ENCODE measurements at regions of chr1 and their contacts with region 1.

Region 1: GRCh38 chr1:85307987-85308832 is 31.8 kb upstream of the BCL10 start:
- DNase-seq: peak; percentile 93
- H3K4me3 Mint-ChIP-seq: no peak overlapping the region
- H3K27ac Mint-ChIP-seq: peak overlapping the region; percentile 49
- H3K4me1 Mint-ChIP-seq: peaks cover 37% of the 10 kb centered on the region
- H3K27me3 Mint-ChIP-seq: no peaks in the 10 kb centered on the region
- CTCF ChIP-seq: peak; percentile 95

Region 2: DNA sequence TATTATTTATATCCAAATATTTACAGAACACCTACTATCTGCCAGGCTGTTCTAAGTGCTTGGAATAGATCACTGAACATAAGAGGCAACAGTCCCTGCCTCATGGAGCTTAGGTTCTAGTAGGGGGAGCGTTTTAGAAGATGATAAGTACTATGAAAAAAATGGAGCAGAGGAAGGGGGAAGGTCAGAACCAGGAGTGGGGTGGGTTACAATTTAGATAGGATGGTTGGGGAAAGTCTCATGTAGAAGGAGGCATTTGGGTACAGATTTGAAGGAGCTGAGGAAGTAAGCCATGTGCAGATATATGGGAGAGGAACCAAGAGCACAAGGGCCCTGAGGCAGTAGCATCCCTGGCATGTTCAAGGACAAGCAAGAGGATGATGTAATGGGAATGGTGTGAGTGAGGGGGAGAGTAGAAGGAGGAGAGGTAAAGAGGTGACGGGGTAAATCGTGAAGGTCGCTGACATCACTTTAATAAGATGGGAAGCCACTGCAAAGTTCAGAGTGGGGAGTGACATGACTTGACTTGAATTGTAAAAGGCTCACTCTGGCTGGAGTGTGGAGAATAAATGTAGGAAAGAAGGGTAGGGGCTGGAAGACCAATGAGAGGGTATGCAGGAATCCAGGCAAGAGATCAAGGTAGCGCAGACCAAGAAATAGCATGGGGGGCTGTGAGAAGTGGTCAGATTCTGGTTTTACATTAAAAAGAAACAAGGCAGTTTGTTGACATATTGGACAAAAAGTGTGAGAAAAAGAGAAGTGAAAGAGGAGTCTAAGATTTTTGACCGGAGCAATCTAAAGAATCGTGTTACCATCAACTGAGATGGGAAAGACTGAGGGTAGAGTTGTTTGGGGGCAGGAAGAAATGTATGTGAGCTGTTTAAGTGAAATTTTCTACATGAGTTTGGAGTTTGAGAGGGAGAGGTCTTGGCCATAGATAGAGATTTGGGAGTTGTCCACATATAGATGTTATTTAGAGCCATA is 507.8 kb before region 1 on chr1:
- CTCF ChIA-PET with region 1: no interaction called
- intact Hi-C with region 1: no loop called
- DNase-seq: no peak
- H3K4me3 Mint-ChIP-seq: no peak overlapping the region
- H3K27ac Mint-ChIP-seq: no peak overlapping the region
- H3K4me1 Mint-ChIP-seq: no peaks in the 10 kb centered on the region
- H3K27me3 Mint-ChIP-seq: peaks cover 7% of the 10 kb centered on the region
- CTCF ChIP-seq: no peak

Region 3: DNA sequence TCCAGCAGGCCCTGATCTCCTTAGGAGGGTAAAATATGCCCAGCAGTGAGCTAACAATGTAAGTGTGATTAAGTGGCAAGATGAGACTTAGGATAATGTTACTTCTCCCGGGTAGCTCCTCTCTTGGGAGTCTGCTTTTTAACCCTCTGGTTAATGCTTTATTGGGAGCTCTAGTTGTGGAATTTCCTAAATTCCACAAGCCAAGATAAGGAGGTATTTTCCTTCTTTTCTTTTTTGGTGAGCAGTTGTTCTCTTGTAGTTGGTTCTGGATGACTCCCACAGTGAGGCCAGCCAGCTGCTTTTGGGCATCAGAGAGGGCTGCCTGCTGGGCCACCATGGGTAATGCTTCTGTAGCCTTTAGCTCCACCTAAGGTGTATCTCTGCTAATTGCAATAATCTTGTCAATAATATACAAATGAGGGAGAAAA is 68.0 kb before region 1 on chr1:
- CTCF ChIA-PET with region 1: no interaction called
- intact Hi-C with region 1: no loop called
- DNase-seq: peak; percentile 26
- H3K4me3 Mint-ChIP-seq: no peak overlapping the region
- H3K27ac Mint-ChIP-seq: no peak overlapping the region
- H3K4me1 Mint-ChIP-seq: no peaks in the 10 kb centered on the region
- H3K27me3 Mint-ChIP-seq: no peaks in the 10 kb centered on the region
- CTCF ChIP-seq: no peak

Region 4: DNA sequence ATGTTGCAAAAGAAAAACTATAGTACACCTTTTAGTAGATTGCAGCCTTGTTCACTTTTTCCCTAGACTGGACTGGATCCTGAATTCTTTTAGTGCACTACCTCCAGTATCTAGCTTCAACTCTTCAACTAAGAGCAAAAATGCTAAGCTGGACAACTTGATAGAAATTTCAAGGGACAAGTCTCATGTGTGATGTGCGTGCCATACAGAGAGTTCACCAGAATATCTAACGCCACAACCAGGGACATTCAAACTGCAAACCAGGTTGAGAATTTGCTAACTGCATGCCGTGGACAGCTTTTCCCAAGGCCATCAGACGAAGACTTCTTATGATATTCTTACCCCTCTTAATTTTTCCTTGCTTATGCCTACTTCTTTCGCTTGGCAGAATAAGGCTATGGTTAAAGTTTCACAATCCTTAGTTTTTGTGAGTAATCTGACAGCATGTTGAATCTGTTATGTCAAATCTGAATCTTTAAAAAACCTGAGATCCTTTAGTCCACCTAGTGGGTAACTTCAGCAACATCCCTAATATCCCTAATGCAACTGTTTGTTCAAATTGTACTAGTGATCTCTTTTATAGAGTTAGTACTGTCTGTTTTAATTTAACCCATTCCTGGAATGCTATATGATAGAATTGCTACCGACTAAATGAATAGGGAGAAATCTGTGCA is 90.3 kb after region 1 on chr1:
- CTCF ChIA-PET with region 1: interaction called, 3 read pairs
- intact Hi-C with region 1: loop called (anchors 1 kb)
- DNase-seq: no peak
- H3K4me3 Mint-ChIP-seq: no peak overlapping the region
- H3K27ac Mint-ChIP-seq: no peak overlapping the region
- H3K4me1 Mint-ChIP-seq: peaks cover 36% of the 10 kb centered on the region
- H3K27me3 Mint-ChIP-seq: no peaks in the 10 kb centered on the region
- CTCF ChIP-seq: no peak

Region 5: GRCh38 chr1:85502625-85503083 is 194.4 kb after region 1 on chr1:
- CTCF ChIA-PET with region 1: interaction called, 8 read pairs
- intact Hi-C with region 1: loop called (anchors 1 kb)
- DNase-seq: peak; percentile 74
- H3K4me3 Mint-ChIP-seq: peak overlapping the region; percentile 22
- H3K27ac Mint-ChIP-seq: peak overlapping the region; percentile 52
- H3K4me1 Mint-ChIP-seq: peaks cover 13% of the 10 kb centered on the region
- H3K27me3 Mint-ChIP-seq: no peaks in the 10 kb centered on the region
- CTCF ChIP-seq: peak; percentile 38

Region 6: DNA sequence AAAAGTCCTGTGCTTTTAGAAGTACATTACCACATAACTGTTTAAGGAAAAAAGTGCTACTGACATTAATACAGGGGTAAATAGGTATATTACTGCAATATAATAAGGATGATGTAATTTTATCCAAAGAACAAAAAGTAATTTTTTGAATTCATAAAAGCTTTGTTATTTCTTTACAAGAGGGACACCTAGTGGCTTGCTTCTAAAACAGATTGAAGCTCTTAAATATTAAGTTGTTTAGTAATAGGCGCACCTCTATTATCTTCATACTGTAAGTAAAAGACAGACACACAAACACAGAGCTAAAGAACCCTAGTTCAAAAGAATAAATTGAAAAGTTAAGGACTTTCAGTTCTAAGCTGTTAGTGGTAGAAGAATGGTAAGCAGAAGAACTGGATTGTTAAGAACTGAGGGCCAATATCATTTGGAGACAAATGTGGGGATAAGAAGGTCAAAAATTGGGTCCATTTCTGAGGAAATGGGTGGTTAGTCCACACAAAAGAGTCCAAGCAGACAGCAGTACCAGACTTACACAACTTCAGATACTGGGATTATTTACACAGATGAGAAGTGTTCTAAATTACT is 384.6 kb after region 1 on chr1:
- CTCF ChIA-PET with region 1: interaction called, 15 read pairs
- intact Hi-C with region 1: loop called (anchors 1 kb)
- DNase-seq: no peak
- H3K4me3 Mint-ChIP-seq: no peak overlapping the region
- H3K27ac Mint-ChIP-seq: peak overlapping the region; percentile 78
- H3K4me1 Mint-ChIP-seq: peaks cover 32% of the 10 kb centered on the region
- H3K27me3 Mint-ChIP-seq: no peaks in the 10 kb centered on the region
- CTCF ChIP-seq: no peak

Region 7: GRCh38 chr1:86018283-86018923 is 710.2 kb after region 1 on chr1:
- CTCF ChIA-PET with region 1: no interaction called
- intact Hi-C with region 1: loop called (anchors 5 kb)
- DNase-seq: peak; percentile 35
- H3K4me3 Mint-ChIP-seq: no peak overlapping the region
- H3K27ac Mint-ChIP-seq: no peak overlapping the region
- H3K4me1 Mint-ChIP-seq: no peaks in the 10 kb centered on the region
- H3K27me3 Mint-ChIP-seq: no peaks in the 10 kb centered on the region
- CTCF ChIP-seq: peak; percentile 64